Caco-2 (cell line): ENCODE measurements at regions of chr13 and their contacts with region 1.

Region 1: DNA sequence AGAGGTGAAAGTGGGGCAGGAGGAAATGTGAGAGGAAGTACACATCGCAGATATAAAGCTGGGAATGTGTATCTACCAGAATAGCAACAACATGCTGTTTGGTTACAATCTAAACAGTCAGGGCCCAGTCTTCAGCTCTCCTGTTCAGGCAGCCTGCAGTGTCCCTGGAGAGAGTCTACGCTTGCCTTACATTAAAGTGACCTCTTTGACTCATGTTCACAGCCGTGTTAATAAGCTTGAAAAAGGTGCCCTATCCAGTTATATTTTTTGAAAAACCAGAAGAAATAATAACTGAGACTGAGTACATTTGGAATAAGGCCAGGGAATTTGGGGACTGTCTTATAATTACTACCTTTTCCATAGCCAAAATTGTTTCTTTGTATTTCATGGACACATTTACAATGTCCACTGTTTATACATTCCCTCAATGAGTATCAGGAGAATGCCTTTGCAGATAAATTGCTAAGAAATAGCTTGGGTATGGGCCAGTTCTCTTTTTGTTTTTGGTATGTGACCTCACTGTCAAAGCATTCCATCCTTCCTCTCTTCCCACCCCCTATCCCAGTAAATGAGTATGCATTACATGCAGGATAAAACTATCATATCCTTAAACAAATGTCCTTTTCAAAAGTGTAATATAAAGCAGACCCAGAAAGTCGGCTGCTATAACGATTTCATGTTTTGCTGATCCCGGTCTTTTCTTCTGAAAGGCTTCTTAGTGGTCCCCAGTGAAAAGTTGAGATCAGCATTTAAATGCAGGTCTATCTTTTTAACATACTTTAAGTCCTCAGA is 82.6 kb downstream of the PCDH9 start:
- DNase-seq: no peak
- H3K4me3 ChIP-seq: no peak overlapping the region
- H3K4me3 Mint-ChIP-seq: no peak overlapping the region
- H3K27ac Mint-ChIP-seq: no peak overlapping the region
- H3K4me1 ChIP-seq: no peaks in the 10 kb centered on the region
- H3K4me1 Mint-ChIP-seq: peaks cover 6% of the 10 kb centered on the region
- H3K27me3 ChIP-seq: no peaks in the 10 kb centered on the region
- H3K27me3 Mint-ChIP-seq: no peaks in the 10 kb centered on the region
- CTCF ChIP-seq: no peak

Region 2: DNA sequence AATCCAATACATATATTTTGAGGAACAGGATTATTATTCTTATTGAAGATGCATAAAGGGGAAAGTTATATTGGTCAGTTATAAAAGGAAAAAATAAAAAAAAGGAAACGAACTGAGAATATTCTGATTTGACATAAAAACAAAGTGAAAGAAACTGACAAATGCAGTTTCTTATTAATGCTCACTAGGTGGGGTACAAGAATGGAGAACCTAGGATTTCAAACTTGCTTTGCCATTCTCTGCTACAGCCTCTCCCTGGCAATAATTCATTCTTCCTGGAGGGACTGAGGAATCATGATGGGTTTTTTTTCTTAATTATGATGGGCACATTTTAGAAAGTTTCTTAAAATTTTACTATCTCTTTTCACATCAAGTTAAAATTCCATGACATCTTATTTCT is 72.3 kb before region 1 on chr13:
- CTCF ChIA-PET with region 1: no interaction called
- POLR2A ChIA-PET with region 1: no interaction called
- intact Hi-C with region 1: loop called (anchors 5 kb)
- DNase-seq: no peak
- H3K4me3 ChIP-seq: no peak overlapping the region
- H3K4me3 Mint-ChIP-seq: no peak overlapping the region
- H3K27ac Mint-ChIP-seq: no peak overlapping the region
- H3K4me1 ChIP-seq: peaks cover 28% of the 10 kb centered on the region
- H3K4me1 Mint-ChIP-seq: peaks cover 23% of the 10 kb centered on the region
- H3K27me3 ChIP-seq: no peaks in the 10 kb centered on the region
- H3K27me3 Mint-ChIP-seq: no peaks in the 10 kb centered on the region
- CTCF ChIP-seq: peak in 1 of 2 experiments; percentile 26